ENCODE measurements at regions of chr2 and their contacts with region 1.

Region 1: DNA sequence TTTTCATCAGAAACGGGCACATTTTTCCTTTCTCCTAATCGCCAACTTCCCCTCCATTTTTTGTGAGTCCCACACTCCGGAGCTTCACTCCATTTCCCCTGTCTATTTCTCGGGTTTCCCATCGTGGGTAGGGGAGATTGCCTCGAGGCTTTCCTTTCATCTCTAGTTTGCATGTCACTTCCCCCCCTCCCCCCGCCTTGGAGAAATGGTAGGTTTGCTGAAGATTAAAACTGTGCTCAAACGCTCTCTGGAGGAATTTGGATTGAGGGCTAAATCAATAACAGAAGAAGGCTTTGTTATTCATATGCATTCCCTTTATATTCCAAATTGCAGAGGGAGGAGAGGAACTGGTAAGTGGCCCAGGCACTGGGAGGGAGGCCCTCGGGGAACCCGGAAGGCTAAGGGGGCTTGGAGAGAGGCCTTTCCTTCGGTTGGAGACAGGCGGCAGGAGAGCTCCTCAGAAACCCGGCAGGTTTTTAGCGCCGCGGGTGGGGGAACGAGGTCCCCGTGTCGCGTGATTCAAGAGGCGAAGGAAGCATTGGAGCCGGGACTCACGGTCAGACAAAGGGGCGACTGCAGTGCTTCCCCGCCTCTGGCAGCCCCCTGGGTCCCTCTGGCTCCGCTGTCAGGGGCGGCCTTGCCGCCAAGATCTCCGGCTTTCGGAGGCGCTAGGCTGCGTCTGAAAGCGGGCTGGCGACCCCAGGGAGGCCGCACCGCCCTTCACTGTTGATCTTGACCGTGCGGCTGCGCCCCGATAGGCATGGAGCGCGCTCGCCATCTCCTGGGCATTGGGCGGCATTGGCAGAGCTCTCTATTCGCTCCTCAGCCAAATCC is 2.4 kb upstream of the HOXD12 start:
- DNase-seq: peak; percentile 67 to 75
- H3K4me3 ChIP-seq: peak overlapping the region; percentile 42
- H3K4me3 Mint-ChIP-seq: peak overlapping the region; percentile 66
- H3K27ac Mint-ChIP-seq: no peak overlapping the region
- H3K4me1 ChIP-seq: peaks cover 13% of the 10 kb centered on the region
- H3K4me1 Mint-ChIP-seq: no peaks in the 10 kb centered on the region
- H3K27me3 ChIP-seq: peaks cover 14% of the 10 kb centered on the region
- H3K27me3 Mint-ChIP-seq: peaks cover 38% of the 10 kb centered on the region
- CTCF ChIP-seq: peak; percentile 91 to 93

Region 2: DNA sequence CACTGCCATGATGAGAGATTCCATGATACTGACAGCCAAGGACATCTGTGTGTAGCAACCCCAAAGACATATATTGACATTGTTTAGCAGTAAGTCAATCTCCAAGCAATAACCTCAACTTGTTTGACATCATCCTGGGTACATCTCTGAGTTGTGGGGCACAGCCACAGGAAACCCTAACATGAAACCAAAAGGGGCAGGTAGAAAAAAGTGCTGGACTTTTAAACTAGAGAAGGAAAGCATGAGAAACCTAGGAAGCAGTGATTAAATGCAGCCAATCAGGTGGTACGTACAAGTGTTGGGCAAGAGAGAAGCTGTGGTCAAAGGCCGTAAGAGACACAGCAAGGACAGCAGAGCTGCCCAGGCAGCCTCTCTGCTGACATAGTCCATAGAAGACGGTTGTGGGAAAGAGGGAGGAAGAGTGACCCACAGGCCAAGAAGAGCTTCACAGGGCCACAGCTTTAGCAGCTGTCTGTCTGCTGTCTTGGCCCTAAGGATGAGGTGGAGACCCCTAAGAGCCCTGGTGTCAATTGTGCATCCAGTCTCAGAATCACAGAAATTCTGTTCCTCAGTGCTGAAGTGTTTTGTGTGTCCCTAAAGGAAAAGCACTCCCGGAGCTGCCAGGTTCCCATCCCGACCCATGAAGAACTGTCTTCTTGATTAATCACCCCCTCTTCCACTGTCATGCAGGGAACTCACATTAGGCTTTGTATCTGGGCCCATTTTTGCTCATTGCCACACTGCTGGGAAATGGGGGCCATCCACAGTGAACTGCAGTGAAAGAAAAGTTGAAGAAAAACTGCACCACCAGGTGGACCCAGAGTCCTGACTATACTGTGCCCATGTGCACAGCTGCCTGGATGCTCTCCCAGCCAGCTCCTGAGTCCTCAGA is 1066.6 kb before region 1 on chr2:
- CTCF ChIA-PET with region 1: no interaction called
- POLR2A ChIA-PET with region 1: no interaction called
- intact Hi-C with region 1: loop called (anchors 10 kb)
- DNase-seq: peak; percentile 57 to 58
- H3K4me3 ChIP-seq: no peak overlapping the region
- H3K4me3 Mint-ChIP-seq: no peak overlapping the region
- H3K27ac Mint-ChIP-seq: no peak overlapping the region
- H3K4me1 ChIP-seq: no peaks in the 10 kb centered on the region
- H3K4me1 Mint-ChIP-seq: no peaks in the 10 kb centered on the region
- H3K27me3 ChIP-seq: no peaks in the 10 kb centered on the region
- H3K27me3 Mint-ChIP-seq: no peaks in the 10 kb centered on the region
- CTCF ChIP-seq: peak; percentile 45 to 50

Region 3: DNA sequence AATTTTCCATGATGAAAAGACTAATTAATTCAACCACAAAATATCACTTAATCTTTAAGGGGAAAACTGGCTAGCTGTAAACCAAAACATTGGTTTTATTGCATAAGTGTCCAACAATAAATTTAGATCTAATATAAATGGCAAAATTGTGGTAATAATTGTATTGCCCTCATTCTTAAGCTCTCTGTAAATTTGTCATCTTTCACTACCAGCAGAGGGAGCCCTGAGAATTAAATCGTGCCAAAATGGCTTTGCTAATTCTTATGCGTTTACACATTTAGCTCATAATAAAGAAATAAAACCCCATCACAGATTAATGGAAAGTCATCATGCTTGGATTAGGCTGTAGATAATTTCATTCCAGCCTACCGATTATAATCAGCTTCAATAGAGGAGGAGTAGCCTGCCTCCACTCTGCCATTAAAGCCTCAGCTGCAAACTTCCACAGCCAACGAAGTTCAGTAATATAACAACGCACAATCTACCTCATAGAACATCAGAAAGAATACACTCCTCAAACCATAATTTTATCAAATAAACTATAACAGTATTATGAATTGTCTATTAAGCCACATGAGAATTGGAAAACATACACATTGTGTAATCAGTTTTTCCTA is 845.7 kb before region 1 on chr2:
- CTCF ChIA-PET with region 1: interaction called, 16 read pairs
- POLR2A ChIA-PET with region 1: no interaction called
- intact Hi-C with region 1: loop called (anchors 1 kb)
- DNase-seq: peak in 1 of 2 experiments; percentile 29
- H3K4me3 ChIP-seq: no peak overlapping the region
- H3K4me3 Mint-ChIP-seq: no peak overlapping the region
- H3K27ac Mint-ChIP-seq: no peak overlapping the region
- H3K4me1 ChIP-seq: no peaks in the 10 kb centered on the region
- H3K4me1 Mint-ChIP-seq: no peaks in the 10 kb centered on the region
- H3K27me3 ChIP-seq: no peaks in the 10 kb centered on the region
- H3K27me3 Mint-ChIP-seq: peaks cover 16% of the 10 kb centered on the region
- CTCF ChIP-seq: peak; percentile 61 to 68

Region 4: GRCh38 chr2:175309799-175310198 is 787.4 kb before region 1 on chr2:
- CTCF ChIA-PET with region 1: no interaction called
- POLR2A ChIA-PET with region 1: no interaction called
- intact Hi-C with region 1: loop called (anchors 2 kb)
- DNase-seq: peak; percentile 45 to 58
- H3K4me3 ChIP-seq: no peak overlapping the region
- H3K4me3 Mint-ChIP-seq: no peak overlapping the region
- H3K27ac Mint-ChIP-seq: no peak overlapping the region
- H3K4me1 ChIP-seq: no peaks in the 10 kb centered on the region
- H3K4me1 Mint-ChIP-seq: no peaks in the 10 kb centered on the region
- H3K27me3 ChIP-seq: no peaks in the 10 kb centered on the region
- H3K27me3 Mint-ChIP-seq: peaks cover 17% of the 10 kb centered on the region
- CTCF ChIP-seq: peak; percentile 60 to 63

Region 5: GRCh38 chr2:175366815-175367214 is 730.4 kb before region 1 on chr2:
- CTCF ChIA-PET with region 1: interaction called, 3 read pairs
- POLR2A ChIA-PET with region 1: no interaction called
- intact Hi-C with region 1: loop called (anchors 1 kb)
- DNase-seq: peak; percentile 40 to 62
- H3K4me3 ChIP-seq: no peak overlapping the region
- H3K4me3 Mint-ChIP-seq: no peak overlapping the region
- H3K27ac Mint-ChIP-seq: no peak overlapping the region
- H3K4me1 ChIP-seq: no peaks in the 10 kb centered on the region
- H3K4me1 Mint-ChIP-seq: no peaks in the 10 kb centered on the region
- H3K27me3 ChIP-seq: no peaks in the 10 kb centered on the region
- H3K27me3 Mint-ChIP-seq: peaks cover 16% of the 10 kb centered on the region
- CTCF ChIP-seq: peak; percentile 80 to 87

Region 6: GRCh38 chr2:175414882-175415487 is 682.2 kb before region 1 on chr2:
- CTCF ChIA-PET with region 1: no interaction called
- POLR2A ChIA-PET with region 1: no interaction called
- intact Hi-C with region 1: loop called (anchors 1 kb)
- DNase-seq: peak; percentile 52 to 61
- H3K4me3 ChIP-seq: no peak overlapping the region
- H3K4me3 Mint-ChIP-seq: no peak overlapping the region
- H3K27ac Mint-ChIP-seq: no peak overlapping the region
- H3K4me1 ChIP-seq: peaks cover 7% of the 10 kb centered on the region; the same call in 1 of the 2 replicates
- H3K4me1 Mint-ChIP-seq: peaks cover 4% of the 10 kb centered on the region
- H3K27me3 ChIP-seq: no peaks in the 10 kb centered on the region
- H3K27me3 Mint-ChIP-seq: peaks cover 2% of the 10 kb centered on the region
- CTCF ChIP-seq: peak; percentile 78 to 84

Region 7: GRCh38 chr2:175600024-175600831 is 497.0 kb before region 1 on chr2:
- CTCF ChIA-PET with region 1: no interaction called
- POLR2A ChIA-PET with region 1: no interaction called
- intact Hi-C with region 1: loop called (anchors 10 kb)
- DNase-seq: peak in 1 of 2 experiments; percentile 37
- H3K4me3 ChIP-seq: no peak overlapping the region
- H3K4me3 Mint-ChIP-seq: no peak overlapping the region
- H3K27ac Mint-ChIP-seq: peak overlapping the region; percentile 66
- H3K4me1 ChIP-seq: peaks cover 36% of the 10 kb centered on the region
- H3K4me1 Mint-ChIP-seq: peaks cover 8% of the 10 kb centered on the region
- H3K27me3 ChIP-seq: no peaks in the 10 kb centered on the region
- H3K27me3 Mint-ChIP-seq: no peaks in the 10 kb centered on the region
- CTCF ChIP-seq: no peak

Measured in Caco-2 (cell line).